ENCODE measurements at regions of chr11 and their contacts with region 1.

Region 1: DNA sequence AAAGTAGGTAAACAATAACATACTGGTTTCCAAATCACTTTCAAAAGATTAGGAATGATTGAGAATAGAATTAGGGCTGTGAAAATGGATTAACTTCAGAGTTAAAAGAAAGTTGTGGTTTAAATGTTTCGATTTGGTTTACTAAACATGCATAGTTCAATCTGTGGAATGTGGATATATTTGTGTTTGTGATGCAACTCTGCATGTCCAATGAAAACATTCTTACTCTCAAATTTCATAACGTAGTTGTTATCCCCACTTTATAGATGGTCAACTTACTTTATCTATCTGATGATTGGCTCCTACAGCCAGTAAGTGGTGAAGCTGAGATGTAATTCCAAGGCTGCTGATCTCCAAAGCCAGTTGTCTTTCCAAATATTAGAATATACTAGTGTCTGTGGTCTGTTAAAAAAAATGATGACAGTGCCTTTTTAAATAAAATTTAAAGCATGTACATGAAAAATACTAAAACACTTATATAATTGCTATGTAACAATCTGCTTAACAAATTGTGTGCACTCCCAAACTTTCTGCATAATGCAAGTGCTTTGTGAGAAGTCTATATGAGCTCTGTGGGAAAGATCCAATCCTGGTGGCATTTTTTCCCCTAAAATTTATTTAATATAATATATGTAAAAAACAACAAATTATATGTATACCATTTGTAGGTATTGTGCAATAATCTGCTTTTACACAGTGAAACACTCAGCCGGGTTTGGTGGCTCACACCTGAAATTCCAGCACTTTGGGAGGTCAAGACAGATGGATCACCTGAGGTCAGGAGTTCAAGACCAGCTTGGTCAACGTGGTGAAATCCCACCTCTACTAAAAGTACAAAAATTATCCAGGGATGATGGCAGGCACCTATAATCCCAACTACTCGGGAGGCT is 9.7 kb upstream of the SIK3 start:
- DNase-seq: no peak
- H3K4me3 ChIP-seq: no peak overlapping the region
- H3K27ac ChIP-seq: no peak overlapping the region
- H3K4me1 ChIP-seq: no peaks in the 10 kb centered on the region
- H3K27me3 ChIP-seq: no peaks in the 10 kb centered on the region
- CTCF ChIP-seq: no peak
- EP300 ChIP-seq: no peak
- POLR2A ChIP-seq: no peak

Region 2: GRCh38 chr11:116879800-116880625 is 227.9 kb before region 1 on chr11:
- intact Hi-C with region 1: loop called (anchors 1 kb)
- DNase-seq: no peak
- H3K4me3 ChIP-seq: no peak overlapping the region
- H3K27ac ChIP-seq: peak overlapping the region in 1 of 4 donors; percentile 8
- H3K4me1 ChIP-seq: peaks cover 0 to 9% (median 4%) of the 10 kb centered on the region in 4 donors
- H3K27me3 ChIP-seq: no peaks in the 10 kb centered on the region
- CTCF ChIP-seq: peak; percentile 52 to 67 (median 60)
- EP300 ChIP-seq: no peak
- POLR2A ChIP-seq: no peak

Region 3: GRCh38 chr11:117316197-117316961 is 208.4 kb after region 1 on chr11 and contains the start of gene BACE1:
- intact Hi-C with region 1: no loop called
- DNase-seq: peak; percentile 92
- H3K4me3 ChIP-seq: peak within 1 kb of the TSS; percentile 53 to 95 (median 74)
- H3K27ac ChIP-seq: peak within 1 kb of the TSS; percentile 68 to 76 (median 75)
- H3K4me1 ChIP-seq: peaks cover 0 to 27% (median 26%) of the 10 kb centered on the region in 4 donors
- H3K27me3 ChIP-seq: no peaks in the 10 kb centered on the region
- CTCF ChIP-seq: peak in 1 of 4 experiments; percentile 27
- EP300 ChIP-seq: no peak
- POLR2A ChIP-seq: no peak
- total RNA-seq, gene BACE1: 13.2 to 24.6 (median 16.0) TPM

Measured in sigmoid colon (tissue), 7 donors.